Mucosa of descending colon (tissue), 3 donors: ENCODE measurements at regions of chr5 and their contacts with region 1.

Region 1: DNA sequence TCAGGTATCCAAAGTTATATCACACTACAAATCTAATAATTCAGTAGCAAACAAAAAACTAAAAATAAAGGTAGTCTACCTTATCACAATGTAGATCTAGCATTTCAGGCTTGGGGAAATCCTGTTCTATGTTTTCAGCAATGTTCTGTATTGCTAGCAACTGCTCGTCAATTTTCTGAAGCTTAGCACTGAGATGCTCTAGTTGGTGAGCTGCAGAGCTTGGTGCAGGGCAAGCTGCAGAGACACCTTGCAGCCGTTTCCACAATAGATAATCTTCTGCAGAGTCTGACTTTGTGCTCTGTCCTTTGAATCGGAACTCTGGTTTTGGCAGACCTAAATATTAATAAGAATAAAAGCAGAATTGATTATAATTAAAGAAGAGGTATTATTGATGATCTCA is 95.5 kb downstream of the CPLANE1 start:
- DNase-seq: no peak
- ATAC-seq: no peak
- H3K4me3 ChIP-seq: no peak overlapping the region
- H3K4me1 ChIP-seq: no peaks in the 10 kb centered on the region
- CTCF ChIP-seq: no peak

Region 2: GRCh38 chr5:37005946-37006540 is 147.6 kb before region 1 on chr5:
- intact Hi-C with region 1: loop called in 1 of 2 experiments (anchors 5 kb)
- DNase-seq: no peak
- ATAC-seq: no peak
- H3K4me3 ChIP-seq: no peak overlapping the region
- H3K4me1 ChIP-seq: no peaks in the 10 kb centered on the region
- CTCF ChIP-seq: no peak